ENCODE measurements at regions of chr1 and their contacts with region 1.

Region 1: DNA sequence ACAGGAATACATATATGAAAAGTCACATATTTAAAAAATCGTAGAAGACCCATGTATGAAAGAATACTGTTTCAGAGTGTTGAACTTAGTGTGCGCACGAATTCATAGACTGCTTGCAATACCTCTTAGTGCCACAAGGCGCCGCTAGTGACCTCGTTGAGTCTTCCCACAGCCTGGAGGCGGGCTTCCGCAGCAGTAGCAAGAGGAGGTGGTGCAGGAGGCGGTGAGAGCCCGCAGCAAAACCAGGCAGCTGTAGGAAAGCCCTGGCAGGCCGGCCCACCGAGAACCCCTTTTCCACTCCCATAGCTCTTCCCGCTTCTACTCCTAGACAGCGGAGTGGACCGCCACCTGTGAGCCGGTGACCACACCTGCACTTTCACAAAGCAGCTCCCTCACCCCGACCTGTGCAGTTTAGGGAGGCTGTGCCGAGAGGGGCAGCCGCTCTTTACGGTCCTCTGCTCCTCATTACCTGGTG is 23.5 kb downstream of the MTARC1 start:
- DNase-seq: peak; percentile 77 to 88 (median 84)
- ATAC-seq: peak; percentile 62 to 91 (median 80)
- H3K4me3 ChIP-seq: peak overlapping the region in 10 of 12 donors; percentile 7 to 46 (median 30)
- H3K27ac ChIP-seq: no peak overlapping the region
- H3K4me1 ChIP-seq: peaks cover 0 to 21% (median 7%) of the 10 kb centered on the region in 12 donors
- H3K27me3 ChIP-seq: no peaks in the 10 kb centered on the region
- CTCF ChIP-seq: peak; percentile 88 to 97 (median 94)
- POLR2A ChIP-seq: no peak

Region 2: DNA sequence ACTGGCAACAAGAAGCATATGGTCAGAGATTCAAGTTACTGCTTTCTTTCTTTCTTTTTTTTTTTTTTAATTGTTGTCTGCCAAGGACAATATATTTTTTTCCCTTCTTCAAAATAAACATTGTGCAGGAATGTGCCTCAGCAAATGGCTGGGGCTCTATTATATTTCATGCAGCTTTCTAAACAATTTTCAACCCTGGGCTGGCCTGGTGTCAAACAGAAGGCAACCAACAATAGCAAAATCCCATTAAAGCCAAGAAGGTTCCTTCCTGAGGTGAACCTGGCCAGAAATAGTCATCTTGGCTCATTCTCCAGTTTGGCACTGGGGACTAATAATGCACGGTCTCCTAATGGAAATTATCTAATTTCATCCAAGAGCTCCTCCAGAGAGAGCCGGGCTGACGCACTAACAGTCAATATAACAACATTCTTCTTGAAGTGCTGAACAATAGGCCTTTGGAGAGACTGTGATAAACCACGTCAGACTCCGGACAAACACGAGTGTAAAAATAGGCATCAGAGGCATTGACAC is 33.3 kb after region 1 on chr1:
- intact Hi-C with region 1: loop called in 2 of 10 experiments (anchors 2 kb)
- DNase-seq: peak in 4 of 5 donors; percentile 73 to 86 (median 83)
- ATAC-seq: peak; percentile 96 to 99 (median 98)
- H3K4me3 ChIP-seq: no peak overlapping the region
- H3K27ac ChIP-seq: peak overlapping the region in 11 of 12 donors; percentile 9 to 79 (median 67)
- H3K4me1 ChIP-seq: peaks cover 0 to 39% (median 15%) of the 10 kb centered on the region in 12 donors
- H3K27me3 ChIP-seq: no peaks in the 10 kb centered on the region
- CTCF ChIP-seq: no peak
- POLR2A ChIP-seq: no peak

Region 3: DNA sequence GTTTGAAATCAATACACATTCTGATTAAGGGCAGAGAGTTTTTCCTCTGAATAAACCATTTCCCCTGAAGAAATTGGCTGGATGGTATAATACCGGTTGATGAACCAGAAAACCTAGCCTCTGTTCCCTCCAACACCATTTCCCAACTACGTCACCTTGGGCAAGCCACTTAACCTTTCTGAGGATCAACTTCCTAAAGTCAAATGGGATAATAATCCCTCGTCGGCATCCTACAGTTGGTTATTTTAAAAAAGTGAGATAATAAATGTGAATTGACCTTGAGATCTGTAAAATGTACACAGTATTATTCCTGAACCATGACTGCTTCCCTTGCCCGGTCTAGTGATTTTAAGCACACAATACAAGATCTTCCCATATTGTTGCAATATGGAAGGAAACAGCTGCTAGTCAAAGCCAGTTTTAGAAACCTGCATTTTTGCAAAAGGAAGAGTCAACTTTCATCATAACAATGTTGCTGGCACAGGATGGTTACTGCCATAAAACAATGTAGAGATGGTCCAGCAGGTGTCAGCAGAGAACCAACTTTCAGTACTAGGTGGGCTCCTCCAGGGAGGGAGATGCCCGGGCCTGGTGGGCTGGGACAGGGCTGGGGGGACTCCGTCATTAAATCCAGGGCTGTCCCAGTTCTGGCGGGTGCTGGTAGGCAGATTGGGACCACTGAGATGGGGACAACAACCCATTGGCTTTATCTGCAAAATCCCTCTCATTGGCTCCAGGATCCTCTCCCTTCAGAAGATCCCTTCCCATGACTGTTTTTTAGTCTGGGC is 63.8 kb after region 1 on chr1:
- intact Hi-C with region 1: loop called in 6 of 10 experiments (anchors 1 to 5 kb)
- DNase-seq: peak in 3 of 5 donors; percentile 63 to 72 (median 66)
- ATAC-seq: peak in 3 of 4 donors; percentile 27 to 43 (median 37)
- H3K4me3 ChIP-seq: no peak overlapping the region
- H3K27ac ChIP-seq: peak overlapping the region in 4 of 12 donors; percentile 13 to 97 (median 42)
- H3K4me1 ChIP-seq: peaks cover 0 to 47% (median 29%) of the 10 kb centered on the region in 12 donors
- H3K27me3 ChIP-seq: peaks cover 0 to 7% (median 0%) of the 10 kb centered on the region in 9 donors
- CTCF ChIP-seq: peak; percentile 53 to 87 (median 76)
- POLR2A ChIP-seq: no peak

Region 4: DNA sequence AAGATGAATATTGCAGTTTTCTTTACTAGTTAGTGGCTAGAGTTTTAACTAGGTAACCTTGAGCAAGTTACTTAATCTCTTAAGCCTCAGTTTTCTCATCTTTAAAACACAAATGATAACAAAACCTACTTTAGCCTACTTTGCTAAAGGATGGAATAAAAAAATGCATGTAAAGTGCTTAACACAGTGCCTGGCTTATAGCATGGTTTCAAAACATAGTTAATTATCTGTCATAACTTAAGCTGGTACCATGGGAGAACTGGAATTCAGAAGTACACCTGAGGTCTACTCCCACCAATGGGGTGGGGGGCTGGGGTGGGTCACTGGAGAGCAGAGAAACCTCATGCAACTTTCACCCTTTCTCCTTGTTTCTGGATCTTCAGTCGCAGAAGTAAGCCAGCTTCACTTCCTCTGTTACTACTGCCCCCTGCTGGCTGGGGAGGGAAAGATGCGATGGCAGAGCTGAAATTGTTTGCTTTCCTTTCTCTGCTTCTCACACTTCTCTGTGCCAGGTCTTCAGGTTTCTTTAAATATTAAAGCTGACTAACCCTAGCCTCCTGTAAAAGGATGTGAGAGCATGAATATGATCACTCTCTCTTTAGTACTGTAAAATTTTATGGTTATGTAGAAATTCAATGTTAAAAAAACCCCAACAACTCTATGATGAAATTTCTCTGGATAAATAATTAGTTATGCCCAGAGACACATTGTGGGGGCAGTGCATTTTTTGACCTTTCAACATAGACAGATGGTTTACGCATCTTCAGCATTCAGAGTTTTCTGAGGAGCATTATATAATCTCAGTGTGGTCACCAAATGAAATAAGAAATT is 393.2 kb after region 1 on chr1:
- intact Hi-C with region 1: loop called in 2 of 10 experiments (anchors 5 to 10 kb)
- DNase-seq: peak; percentile 76 to 86 (median 80)
- ATAC-seq: peak; percentile 44 to 76 (median 71)
- H3K4me3 ChIP-seq: peak overlapping the region in 1 of 12 donors; percentile 1
- H3K27ac ChIP-seq: peak overlapping the region; percentile 2 to 68 (median 39)
- H3K4me1 ChIP-seq: peaks cover 0 to 27% (median 18%) of the 10 kb centered on the region in 12 donors
- H3K27me3 ChIP-seq: no peaks in the 10 kb centered on the region
- CTCF ChIP-seq: peak; percentile 80 to 96 (median 91)
- POLR2A ChIP-seq: no peak

Measured in heart left ventricle (tissue), 16 donors.